ENCODE measurements at regions of chr11 and their contacts with region 1.

Region 1: GRCh38 chr11:34065505-34066203 is 14.1 kb downstream of the CAPRIN1 start:
- DNase-seq: no peak
- ATAC-seq: no peak; the same call in 1 of the 2 replicates
- H3K4me3 ChIP-seq: no peak overlapping the region
- H3K27ac ChIP-seq: no peak overlapping the region
- H3K4me1 ChIP-seq: peaks cover 19% of the 10 kb centered on the region; the same call in 1 of the 2 replicates
- H3K27me3 ChIP-seq: no peaks in the 10 kb centered on the region
- CTCF ChIP-seq: no peak; the same call in 1 of the 2 replicates

Region 2: DNA sequence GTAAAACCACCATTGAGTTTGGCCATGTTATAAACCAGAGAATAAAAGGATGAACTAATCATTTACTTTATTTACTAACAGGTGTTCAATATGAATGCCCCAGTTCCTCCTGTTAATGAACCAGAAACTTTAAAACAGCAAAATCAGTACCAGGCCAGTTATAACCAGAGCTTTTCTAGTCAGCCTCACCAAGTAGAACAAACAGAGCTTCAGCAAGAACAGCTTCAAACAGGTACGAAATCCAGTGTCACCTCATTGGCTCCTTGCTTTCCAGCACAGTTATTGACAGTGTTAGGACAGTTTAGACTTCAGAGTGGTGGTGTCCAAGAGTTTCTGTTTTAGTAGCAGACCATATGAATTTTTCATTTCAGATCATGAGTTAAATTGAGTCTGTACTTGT is 26.2 kb after region 1 on chr11:
- CTCF ChIA-PET with region 1: no interaction called
- POLR2A ChIA-PET with region 1: interaction called, 10 read pairs
- in situ Hi-C with region 1: no loop called
- intact Hi-C with region 1: no loop called
- DNase-seq: no peak
- ATAC-seq: no peak
- H3K4me3 ChIP-seq: no peak overlapping the region
- H3K27ac ChIP-seq: no peak overlapping the region
- H3K4me1 ChIP-seq: no peaks in the 10 kb centered on the region
- H3K27me3 ChIP-seq: no peaks in the 10 kb centered on the region
- CTCF ChIP-seq: no peak

Region 3: GRCh38 chr11:34223021-34223813 is 157.6 kb after region 1 on chr11:
- CTCF ChIA-PET with region 1: no interaction called
- POLR2A ChIA-PET with region 1: no interaction called
- in situ Hi-C with region 1: no loop called
- intact Hi-C with region 1: no loop called
- DNase-seq: no peak
- ATAC-seq: peak; percentile 80
- H3K4me3 ChIP-seq: peak overlapping the region in 1 of 2 experiments; percentile 6; a peak in 1 of 4 replicates
- H3K27ac ChIP-seq: peak overlapping the region; percentile 76
- H3K4me1 ChIP-seq: peaks cover 28% of the 10 kb centered on the region
- H3K27me3 ChIP-seq: no peaks in the 10 kb centered on the region
- CTCF ChIP-seq: no peak

Region 4: GRCh38 chr11:34250732-34251639 is 185.3 kb after region 1 on chr11:
- CTCF ChIA-PET with region 1: no interaction called
- POLR2A ChIA-PET with region 1: interaction called, 11 read pairs
- in situ Hi-C with region 1: no loop called
- intact Hi-C with region 1: no loop called
- DNase-seq: peak; percentile 74
- ATAC-seq: peak; percentile 82
- H3K4me3 ChIP-seq: peak overlapping the region; percentile 16 to 48; a peak in 3 of 4 replicates
- H3K27ac ChIP-seq: peak overlapping the region; percentile 54
- H3K4me1 ChIP-seq: peaks cover 63% of the 10 kb centered on the region
- H3K27me3 ChIP-seq: no peaks in the 10 kb centered on the region
- CTCF ChIP-seq: no peak

Region 5: DNA sequence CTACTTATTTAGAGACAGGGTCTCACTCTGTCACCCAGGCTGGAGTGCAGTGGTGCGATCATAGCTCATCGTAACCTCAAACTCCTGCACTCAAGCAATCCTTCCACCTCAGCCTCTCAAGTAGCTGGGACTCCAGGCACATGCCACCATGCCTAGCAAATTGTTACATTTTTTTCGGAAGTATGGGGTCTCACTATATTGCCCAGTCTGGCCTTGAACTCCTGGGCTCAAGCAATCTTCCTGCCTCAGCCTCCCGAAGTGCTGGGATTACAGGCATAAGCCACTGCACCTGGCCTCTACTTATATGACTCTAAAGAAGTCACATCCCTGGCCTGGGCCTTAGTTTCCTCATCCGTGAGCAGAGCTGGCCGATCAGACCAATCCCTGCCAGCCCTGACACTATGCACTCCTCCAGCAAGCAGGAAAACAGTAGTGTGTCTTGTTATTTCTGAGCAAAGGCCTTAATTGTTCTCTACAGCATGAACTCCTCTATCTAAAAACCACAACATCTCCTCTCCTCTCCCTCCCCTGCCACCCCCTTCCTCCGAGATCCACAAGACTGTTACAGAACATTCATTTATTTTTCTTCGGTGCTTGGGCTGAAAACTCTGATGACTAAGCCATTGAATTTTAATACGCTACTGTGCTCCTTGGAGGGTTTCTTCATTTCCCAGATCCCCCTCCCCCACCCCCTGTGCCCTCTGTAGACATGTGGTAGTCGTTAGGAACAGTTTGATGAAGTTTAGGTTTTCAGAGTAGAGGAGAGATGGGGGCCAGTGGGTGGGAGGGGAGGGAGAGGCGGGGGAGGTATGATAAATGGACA is 200.6 kb after region 1 on chr11:
- CTCF ChIA-PET with region 1: no interaction called
- POLR2A ChIA-PET with region 1: no interaction called
- in situ Hi-C with region 1: no loop called
- intact Hi-C with region 1: no loop called
- DNase-seq: no peak
- ATAC-seq: peak; percentile 48
- H3K4me3 ChIP-seq: no peak overlapping the region
- H3K27ac ChIP-seq: peak overlapping the region; percentile 81
- H3K4me1 ChIP-seq: peaks cover 58% of the 10 kb centered on the region
- H3K27me3 ChIP-seq: no peaks in the 10 kb centered on the region
- CTCF ChIP-seq: no peak